Activated T-helper 2 cell treated with anti-CD3 and anti-CD28 coated beads, Interferon-gamma antibody, Interleukin-2, Interleukin-4, amounts not matched to agents 10 μg/mL and 5 μg/mL and 100 μg/mL, durations not matched to agents 14 hours and 24 hours and 36 hours (primary cell): ENCODE measurements at regions of chrX and their contacts with region 1.

Region 1: DNA sequence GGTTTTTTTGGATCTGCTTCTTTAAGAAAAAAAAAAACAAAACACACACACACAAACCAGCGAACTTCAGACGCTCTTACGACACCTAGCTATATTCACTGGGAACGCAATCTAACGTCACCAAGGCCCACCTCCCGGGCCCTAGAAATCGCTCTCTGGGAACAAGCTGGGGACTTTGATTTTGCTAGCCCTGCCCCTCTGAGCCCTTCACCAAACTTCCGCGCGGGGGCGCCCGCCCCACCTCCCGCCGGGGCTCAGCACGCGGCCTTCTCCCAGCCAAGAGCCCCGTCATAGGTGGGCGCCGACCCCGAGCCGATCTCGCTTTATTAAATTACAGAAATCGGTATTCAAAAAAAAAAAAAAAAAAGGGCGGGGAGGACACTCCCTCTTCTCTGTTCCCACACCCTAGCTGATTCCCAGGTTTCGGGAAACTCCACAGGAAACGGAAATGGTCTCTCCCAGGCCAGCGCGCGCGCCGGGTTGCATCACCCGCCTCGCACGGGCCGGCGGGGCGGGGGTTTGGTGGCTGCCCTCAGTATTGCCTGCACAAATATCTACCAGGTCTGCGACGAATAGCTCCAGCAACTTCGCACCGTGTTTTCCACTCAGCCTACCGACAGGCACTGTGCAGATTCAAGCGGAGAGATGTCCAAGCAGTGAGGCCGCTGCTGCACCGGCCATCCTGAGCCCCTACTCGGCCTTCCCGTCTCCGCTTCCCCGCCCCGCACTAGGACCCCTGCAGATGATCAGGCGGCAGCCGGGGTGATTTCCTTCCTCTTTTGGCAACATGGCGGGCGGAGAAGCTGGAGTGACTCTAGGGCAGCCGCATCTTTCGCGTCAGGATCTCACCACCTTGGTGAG is at the start of gene EIF2S3:
- DNase-seq: peak; percentile 84
- H3K4me3 Mint-ChIP-seq: no peak within 1 kb of the TSS
- H3K27ac Mint-ChIP-seq: peak within 1 kb of the TSS; percentile 99
- H3K4me1 Mint-ChIP-seq: peaks cover 5% of the 10 kb centered on the region
- H3K27me3 Mint-ChIP-seq: no peaks in the 10 kb centered on the region
- total RNA-seq, gene EIF2S3: 188 and 189 TPM in 2 replicates

Region 2: GRCh38 chrX:23626651-23627050 is 427.8 kb before region 1 on chrX:
- intact Hi-C with region 1: no loop called
- DNase-seq: no peak
- H3K4me3 Mint-ChIP-seq: no peak overlapping the region
- H3K27ac Mint-ChIP-seq: no peak overlapping the region
- H3K4me1 Mint-ChIP-seq: no peaks in the 10 kb centered on the region
- H3K27me3 Mint-ChIP-seq: peaks cover 5% of the 10 kb centered on the region

Region 3: DNA sequence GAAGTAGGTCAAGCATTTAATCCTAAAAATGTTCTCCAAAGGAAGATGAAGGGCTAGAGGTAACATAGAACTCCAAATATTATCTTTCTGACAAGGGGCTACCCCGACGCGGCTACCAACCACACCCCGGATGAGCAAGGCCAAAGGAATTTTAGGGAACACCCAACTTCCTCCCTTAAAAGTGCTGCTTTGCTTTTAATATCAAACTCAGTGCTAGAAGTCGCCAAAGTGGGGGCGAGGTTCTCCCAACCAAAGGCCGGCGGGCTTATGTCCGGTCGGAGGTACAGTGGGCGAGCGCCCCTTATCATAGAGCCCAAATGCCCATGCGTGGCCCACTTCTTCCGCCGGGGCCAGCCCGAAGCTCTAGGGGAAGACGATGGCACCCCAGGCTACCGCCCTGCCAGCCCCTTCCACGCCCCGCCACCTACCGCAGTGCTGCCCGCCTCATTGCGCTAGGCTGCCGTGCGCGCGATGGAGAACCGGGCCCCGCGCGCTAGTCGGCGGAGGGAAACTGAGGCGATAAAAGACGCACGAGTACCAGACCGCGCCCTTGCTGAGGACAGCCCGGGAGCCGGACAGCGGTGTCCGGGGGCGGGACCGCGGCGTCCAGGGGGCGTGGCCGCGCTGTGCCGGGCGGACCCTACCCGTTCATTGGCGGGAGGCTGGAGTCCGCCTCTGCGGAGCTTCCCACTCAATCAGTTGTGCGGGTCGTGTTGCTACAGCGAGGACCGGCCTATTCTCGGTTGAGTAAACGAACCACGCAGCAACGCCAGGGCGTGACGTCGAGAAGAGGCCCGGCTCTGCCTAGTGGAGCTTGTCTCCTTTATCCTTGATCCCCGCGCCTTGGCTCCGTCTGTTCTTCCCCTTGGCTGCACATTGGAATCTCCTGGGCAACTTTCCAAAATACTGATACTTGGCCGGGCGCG is 311.5 kb before region 1 on chrX and contains the start of gene ACOT9:
- intact Hi-C with region 1: loop called (anchors 5 kb)
- DNase-seq: peak; percentile 75
- H3K4me3 Mint-ChIP-seq: peak within 1 kb of the TSS; percentile 94
- H3K27ac Mint-ChIP-seq: peak within 1 kb of the TSS; percentile 90
- H3K4me1 Mint-ChIP-seq: peaks cover 19% of the 10 kb centered on the region
- H3K27me3 Mint-ChIP-seq: no peaks in the 10 kb centered on the region
- total RNA-seq, gene ACOT9: 75.2 and 76.0 TPM in 2 replicates

Region 4: GRCh38 chrX:23907498-23908218 is 146.8 kb before region 1 on chrX and contains the starts of genes APOO and CXorf58:
- intact Hi-C with region 1: loop called (anchors 1 kb)
- DNase-seq: peak; percentile 90
- H3K4me3 Mint-ChIP-seq: peak within 1 kb of the TSS; percentile 77
- H3K27ac Mint-ChIP-seq: peak within 1 kb of the TSS; percentile 85
- H3K4me1 Mint-ChIP-seq: peaks cover 22% of the 10 kb centered on the region
- H3K27me3 Mint-ChIP-seq: no peaks in the 10 kb centered on the region
- total RNA-seq, gene APOO: 21.9 and 22.4 TPM in 2 replicates
- total RNA-seq, gene CXorf58: 0.21 TPM in 1 of 2 replicates, not detected in the other

Region 5: GRCh38 chrX:24014388-24015018 is 39.9 kb before region 1 on chrX:
- intact Hi-C with region 1: loop called (anchors 5 kb)
- DNase-seq: no peak
- H3K4me3 Mint-ChIP-seq: peak overlapping the region; percentile 64
- H3K27ac Mint-ChIP-seq: peak overlapping the region; percentile 83
- H3K4me1 Mint-ChIP-seq: peaks cover 35% of the 10 kb centered on the region
- H3K27me3 Mint-ChIP-seq: no peaks in the 10 kb centered on the region

Region 6: DNA sequence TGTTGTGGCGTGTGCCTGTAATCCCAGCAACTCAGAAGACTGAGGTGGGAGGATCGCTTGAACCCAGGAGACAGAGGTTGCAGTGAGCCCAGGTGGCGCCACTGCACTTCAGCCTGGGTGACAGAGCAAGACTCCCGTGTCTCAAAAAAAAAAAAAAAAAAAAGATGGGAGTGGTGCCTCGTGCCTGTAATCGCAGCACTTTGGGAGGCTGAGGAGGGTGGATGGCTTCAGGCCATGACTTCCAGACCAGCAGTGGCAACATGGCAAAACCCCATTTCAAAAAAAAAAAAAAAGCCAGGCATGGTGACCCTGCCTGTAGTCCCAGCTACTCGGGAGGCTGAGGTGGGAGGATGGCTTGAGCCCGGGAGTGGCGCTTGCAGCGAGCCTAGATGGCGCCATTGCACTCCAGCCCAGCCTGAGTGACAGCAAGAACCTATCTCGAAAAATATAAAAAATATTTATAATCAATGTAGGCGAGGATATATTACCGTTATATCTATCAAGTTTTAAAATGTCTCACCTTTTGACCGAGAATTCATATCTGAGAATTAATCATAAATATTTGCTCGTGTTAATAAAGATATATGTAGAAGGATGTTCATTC is 27.4 kb after region 1 on chrX:
- intact Hi-C with region 1: loop called (anchors 2 kb)
- DNase-seq: peak; percentile 36
- H3K4me3 Mint-ChIP-seq: no peak overlapping the region
- H3K27ac Mint-ChIP-seq: peak overlapping the region; percentile 22
- H3K4me1 Mint-ChIP-seq: peaks cover 12% of the 10 kb centered on the region
- H3K27me3 Mint-ChIP-seq: no peaks in the 10 kb centered on the region